ENCODE measurements at regions of chr14 and their contacts with region 1.

Region 1: GRCh38 chr14:58395812-58396788 is at the start of gene TOMM20L:
- DNase-seq: peak; percentile 70 to 81 (median 72)
- H3K4me3 ChIP-seq: peak within 1 kb of the TSS; percentile 24 to 48
- H3K4me3 Mint-ChIP-seq: peak within 1 kb of the TSS; percentile 83 to 91 (median 88)
- H3K27ac ChIP-seq: peak within 1 kb of the TSS; percentile 56
- H3K27ac Mint-ChIP-seq: peak within 1 kb of the TSS; percentile 88 to 95 (median 93)
- H3K4me1 ChIP-seq: peaks cover 12% of the 10 kb centered on the region
- H3K4me1 Mint-ChIP-seq: peaks cover 7 to 21% (median 10%) of the 10 kb centered on the region in 4 donors
- H3K27me3 ChIP-seq: no peaks in the 10 kb centered on the region
- H3K27me3 Mint-ChIP-seq: no peaks in the 10 kb centered on the region
- total RNA-seq, gene TOMM20L: not detected

Region 2: GRCh38 chr14:58199726-58200479 is 196.2 kb before region 1 on chr14 and contains the start of gene ACTR10:
- CTCF ChIA-PET with region 1: interaction called, 3 read pairs
- POLR2A ChIA-PET with region 1: interaction called, 11 read pairs
- intact Hi-C with region 1: no loop called
- DNase-seq: peak; percentile 84 to 91 (median 87)
- H3K4me3 ChIP-seq: peak within 1 kb of the TSS; percentile 64 to 75
- H3K4me3 Mint-ChIP-seq: peak within 1 kb of the TSS; percentile 94 to 97 (median 96)
- H3K27ac ChIP-seq: peak within 1 kb of the TSS; percentile 78
- H3K27ac Mint-ChIP-seq: peak within 1 kb of the TSS; percentile 94 to 99 (median 98)
- H3K4me1 ChIP-seq: peaks cover 33% of the 10 kb centered on the region
- H3K4me1 Mint-ChIP-seq: peaks cover 22 to 48% (median 34%) of the 10 kb centered on the region in 4 donors
- H3K27me3 ChIP-seq: no peaks in the 10 kb centered on the region
- H3K27me3 Mint-ChIP-seq: no peaks in the 10 kb centered on the region
- total RNA-seq, gene ACTR10: 53.7 to 54.9 TPM

Region 3: GRCh38 chr14:58265401-58265800 is 130.7 kb before region 1 on chr14:
- CTCF ChIA-PET with region 1: no interaction called
- POLR2A ChIA-PET with region 1: no interaction called
- intact Hi-C with region 1: no loop called
- DNase-seq: no peak
- H3K4me3 ChIP-seq: no peak overlapping the region
- H3K4me3 Mint-ChIP-seq: no peak overlapping the region
- H3K27ac ChIP-seq: no peak overlapping the region
- H3K27ac Mint-ChIP-seq: peak overlapping the region in 4 of 7 donors; percentile 6 to 48 (median 25)
- H3K4me1 ChIP-seq: no peaks in the 10 kb centered on the region
- H3K4me1 Mint-ChIP-seq: peaks cover 4 to 16% (median 10%) of the 10 kb centered on the region in 4 donors
- H3K27me3 ChIP-seq: no peaks in the 10 kb centered on the region
- H3K27me3 Mint-ChIP-seq: no peaks in the 10 kb centered on the region

Region 4: GRCh38 chr14:58362798-58363412 is 33.2 kb before region 1 on chr14:
- CTCF ChIA-PET with region 1: interaction called, 14 read pairs
- POLR2A ChIA-PET with region 1: no interaction called
- intact Hi-C with region 1: no loop called
- DNase-seq: peak in 4 of 5 donors; percentile 25 to 33 (median 28)
- H3K4me3 ChIP-seq: no peak overlapping the region
- H3K4me3 Mint-ChIP-seq: no peak overlapping the region
- H3K27ac ChIP-seq: no peak overlapping the region
- H3K27ac Mint-ChIP-seq: peak overlapping the region in 2 of 7 donors; percentile 17 to 19
- H3K4me1 ChIP-seq: no peaks in the 10 kb centered on the region
- H3K4me1 Mint-ChIP-seq: peaks cover 0 to 1% (median 0%) of the 10 kb centered on the region in 4 donors
- H3K27me3 ChIP-seq: no peaks in the 10 kb centered on the region
- H3K27me3 Mint-ChIP-seq: no peaks in the 10 kb centered on the region

Region 5: DNA sequence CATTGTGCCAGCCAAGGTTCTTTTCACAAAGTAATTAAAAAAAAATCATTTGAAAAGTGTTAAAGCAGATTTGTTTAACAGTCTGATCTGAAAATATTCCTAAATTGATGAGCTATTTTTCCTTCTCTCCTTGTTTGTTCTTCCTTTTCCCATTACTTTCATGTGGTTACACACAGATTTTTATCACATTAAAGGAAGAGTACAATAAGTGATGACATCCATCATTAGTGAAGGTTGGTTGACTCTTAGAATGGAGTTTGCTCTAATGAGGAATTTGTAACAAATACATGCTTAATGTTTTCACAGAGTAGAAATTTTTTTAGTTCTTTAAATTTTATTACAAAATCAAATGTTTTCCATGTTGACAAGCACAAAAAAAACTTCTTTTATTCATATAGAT is 19.3 kb before region 1 on chr14:
- CTCF ChIA-PET with region 1: interaction called, 21 read pairs
- POLR2A ChIA-PET with region 1: interaction called, 3 read pairs
- intact Hi-C with region 1: no loop called
- DNase-seq: no peak
- H3K4me3 ChIP-seq: no peak overlapping the region
- H3K4me3 Mint-ChIP-seq: no peak overlapping the region
- H3K27ac ChIP-seq: no peak overlapping the region
- H3K27ac Mint-ChIP-seq: no peak overlapping the region
- H3K4me1 ChIP-seq: no peaks in the 10 kb centered on the region
- H3K4me1 Mint-ChIP-seq: peaks cover 0 to 5% (median 2%) of the 10 kb centered on the region in 4 donors
- H3K27me3 ChIP-seq: no peaks in the 10 kb centered on the region
- H3K27me3 Mint-ChIP-seq: no peaks in the 10 kb centered on the region

Region 6: DNA sequence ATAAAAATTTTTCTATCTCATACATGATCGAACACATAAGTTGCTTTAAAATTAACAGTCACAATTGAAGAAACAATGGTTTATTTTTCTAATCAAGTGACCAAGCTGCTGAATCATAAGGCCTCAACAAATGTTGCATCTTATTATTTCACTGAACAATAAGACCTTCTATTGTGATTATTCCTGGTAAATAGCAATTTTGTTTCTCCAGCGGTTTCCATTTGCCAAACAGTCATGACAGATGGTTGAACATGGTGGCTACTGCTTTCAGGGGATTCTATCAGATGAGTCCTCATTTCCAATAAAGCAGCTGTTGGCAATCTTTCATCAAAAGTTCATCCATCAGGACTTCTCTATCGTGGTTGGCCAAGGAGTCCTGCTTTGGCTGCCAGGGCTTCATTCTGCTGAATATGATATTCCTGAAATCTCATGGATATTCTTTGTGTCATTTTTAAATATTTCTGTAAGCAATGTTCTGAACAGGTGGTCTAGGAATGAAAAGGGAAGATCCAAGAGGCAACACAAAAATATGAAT is 12.6 kb after region 1 on chr14:
- CTCF ChIA-PET with region 1: interaction called, 11 read pairs
- POLR2A ChIA-PET with region 1: interaction called, 4 read pairs
- intact Hi-C with region 1: no loop called
- DNase-seq: no peak
- H3K4me3 ChIP-seq: no peak overlapping the region
- H3K4me3 Mint-ChIP-seq: no peak overlapping the region
- H3K27ac ChIP-seq: no peak overlapping the region
- H3K27ac Mint-ChIP-seq: no peak overlapping the region
- H3K4me1 ChIP-seq: no peaks in the 10 kb centered on the region
- H3K4me1 Mint-ChIP-seq: no peaks in the 10 kb centered on the region
- H3K27me3 ChIP-seq: no peaks in the 10 kb centered on the region
- H3K27me3 Mint-ChIP-seq: no peaks in the 10 kb centered on the region